CD4-positive, alpha-beta T cell (primary cell): ENCODE measurements at regions of chr1 and their contacts with region 1.

Region 1: GRCh38 chr1:89286549-89287180 is 14.0 kb upstream of the GBP5 start:
- DNase-seq: peak in 3 of 14 experiments; percentile 39 to 82 (median 48)
- ATAC-seq: peak; percentile 76
- H3K4me3 ChIP-seq: peak overlapping the region; percentile 28
- H3K4me3 Mint-ChIP-seq: peak overlapping the region; percentile 62
- H3K27ac ChIP-seq: peak overlapping the region; percentile 53 to 54
- H3K27ac Mint-ChIP-seq: peak overlapping the region; percentile 78
- H3K4me1 ChIP-seq: peaks cover 45% of the 10 kb centered on the region
- H3K4me1 Mint-ChIP-seq: peaks cover 61% of the 10 kb centered on the region
- H3K27me3 ChIP-seq: no peaks in the 10 kb centered on the region
- H3K27me3 Mint-ChIP-seq: no peaks in the 10 kb centered on the region
- CTCF ChIP-seq: no peak

Region 2: DNA sequence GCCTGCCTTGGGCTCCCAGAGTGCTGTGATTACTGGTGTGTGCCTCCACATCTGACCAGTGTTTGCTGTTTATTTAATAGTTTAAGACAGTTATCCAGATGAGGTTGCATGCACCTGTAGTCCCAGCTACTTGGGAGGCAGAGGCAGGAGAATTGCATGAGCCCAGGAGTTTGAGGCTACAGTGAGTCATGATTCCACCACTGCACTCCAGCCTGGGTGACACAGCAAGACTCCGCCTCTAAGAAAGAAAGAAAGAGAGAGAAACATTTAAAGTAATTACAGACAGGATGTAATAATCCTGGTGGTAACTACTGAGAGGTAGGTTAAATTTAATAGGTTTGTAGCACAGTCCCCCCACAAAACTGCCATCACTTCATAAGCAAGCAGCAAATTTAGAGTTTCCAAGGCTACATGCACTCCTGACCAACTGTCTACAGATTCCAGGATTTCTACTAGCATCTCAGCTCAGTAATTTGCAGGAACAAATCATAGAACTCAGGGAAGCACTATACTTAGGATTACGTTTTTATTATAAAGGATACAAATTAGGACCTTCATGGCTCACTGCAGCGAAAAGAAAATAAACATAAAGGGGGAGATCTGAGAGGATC is 513.0 kb before region 1 on chr1:
- CTCF ChIA-PET with region 1: no interaction called
- POLR2A ChIA-PET with region 1: no interaction called
- intact Hi-C with region 1: no loop called
- DNase-seq: no peak
- ATAC-seq: no peak
- H3K4me3 ChIP-seq: no peak overlapping the region
- H3K4me3 Mint-ChIP-seq: no peak overlapping the region
- H3K27ac ChIP-seq: no peak overlapping the region
- H3K27ac Mint-ChIP-seq: no peak overlapping the region
- H3K4me1 ChIP-seq: no peaks in the 10 kb centered on the region
- H3K4me1 Mint-ChIP-seq: no peaks in the 10 kb centered on the region
- H3K27me3 ChIP-seq: no peaks in the 10 kb centered on the region
- H3K27me3 Mint-ChIP-seq: no peaks in the 10 kb centered on the region
- CTCF ChIP-seq: no peak

Region 3: DNA sequence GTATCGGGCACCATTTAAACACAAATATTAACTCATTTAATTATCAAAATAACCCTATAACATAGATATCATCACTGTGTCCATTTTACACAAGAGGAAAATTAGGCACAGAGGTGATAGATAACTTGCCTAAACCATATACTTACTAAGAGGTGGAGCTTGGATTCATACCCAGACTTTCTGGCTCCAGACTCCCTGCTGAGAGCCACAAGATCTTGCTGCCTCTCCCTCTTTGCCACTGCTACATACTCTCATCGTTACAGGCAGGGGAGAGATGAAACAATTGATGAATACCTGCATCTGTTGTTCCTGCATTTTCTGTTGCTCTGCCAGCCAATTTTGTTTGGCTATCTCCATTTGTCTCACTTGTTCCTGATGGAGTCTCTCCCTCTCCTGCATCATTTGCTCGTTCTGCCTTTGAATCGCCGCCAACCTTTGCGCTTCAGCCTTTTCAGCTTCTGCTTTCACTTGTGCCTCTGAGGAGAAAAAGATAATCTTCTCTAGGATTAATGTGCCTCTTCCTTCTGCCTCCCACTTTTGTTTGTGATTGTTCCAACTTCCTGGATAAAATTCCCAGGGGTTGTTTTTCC is 24.6 kb before region 1 on chr1:
- CTCF ChIA-PET with region 1: no interaction called
- POLR2A ChIA-PET with region 1: interaction called, 26 read pairs
- intact Hi-C with region 1: no loop called
- DNase-seq: no peak
- ATAC-seq: no peak
- H3K4me3 ChIP-seq: no peak overlapping the region
- H3K4me3 Mint-ChIP-seq: no peak overlapping the region
- H3K27ac ChIP-seq: no peak overlapping the region
- H3K27ac Mint-ChIP-seq: peak overlapping the region; percentile 15
- H3K4me1 ChIP-seq: peaks cover 35% of the 10 kb centered on the region
- H3K4me1 Mint-ChIP-seq: peaks cover 66% of the 10 kb centered on the region
- H3K27me3 ChIP-seq: no peaks in the 10 kb centered on the region
- H3K27me3 Mint-ChIP-seq: no peaks in the 10 kb centered on the region
- CTCF ChIP-seq: no peak

Region 4: GRCh38 chr1:89298461-89298860 is 11.8 kb after region 1 on chr1:
- CTCF ChIA-PET with region 1: interaction called, 3 read pairs
- POLR2A ChIA-PET with region 1: interaction called, 24 read pairs
- intact Hi-C with region 1: no loop called
- DNase-seq: no peak
- ATAC-seq: no peak
- H3K4me3 ChIP-seq: no peak overlapping the region
- H3K4me3 Mint-ChIP-seq: no peak overlapping the region
- H3K27ac ChIP-seq: no peak overlapping the region
- H3K27ac Mint-ChIP-seq: no peak overlapping the region
- H3K4me1 ChIP-seq: peaks cover 19% of the 10 kb centered on the region
- H3K4me1 Mint-ChIP-seq: peaks cover 45% of the 10 kb centered on the region
- H3K27me3 ChIP-seq: no peaks in the 10 kb centered on the region
- H3K27me3 Mint-ChIP-seq: no peaks in the 10 kb centered on the region
- CTCF ChIP-seq: no peak

Region 5: GRCh38 chr1:89391686-89392085 is 105.0 kb after region 1 on chr1:
- CTCF ChIA-PET with region 1: no interaction called
- POLR2A ChIA-PET with region 1: no interaction called
- intact Hi-C with region 1: no loop called
- DNase-seq: no peak
- ATAC-seq: no peak
- H3K4me3 ChIP-seq: no peak overlapping the region
- H3K4me3 Mint-ChIP-seq: no peak overlapping the region
- H3K27ac ChIP-seq: no peak overlapping the region
- H3K27ac Mint-ChIP-seq: no peak overlapping the region
- H3K4me1 ChIP-seq: no peaks in the 10 kb centered on the region
- H3K4me1 Mint-ChIP-seq: no peaks in the 10 kb centered on the region
- H3K27me3 ChIP-seq: no peaks in the 10 kb centered on the region
- H3K27me3 Mint-ChIP-seq: no peaks in the 10 kb centered on the region
- CTCF ChIP-seq: no peak

Region 6: GRCh38 chr1:89433421-89433820 is 146.8 kb after region 1 on chr1:
- CTCF ChIA-PET with region 1: no interaction called
- POLR2A ChIA-PET with region 1: no interaction called
- intact Hi-C with region 1: no loop called
- DNase-seq: no peak
- ATAC-seq: no peak
- H3K4me3 ChIP-seq: no peak overlapping the region
- H3K4me3 Mint-ChIP-seq: no peak overlapping the region
- H3K27ac ChIP-seq: no peak overlapping the region
- H3K27ac Mint-ChIP-seq: no peak overlapping the region
- H3K4me1 ChIP-seq: no peaks in the 10 kb centered on the region
- H3K4me1 Mint-ChIP-seq: no peaks in the 10 kb centered on the region
- H3K27me3 ChIP-seq: no peaks in the 10 kb centered on the region
- H3K27me3 Mint-ChIP-seq: peaks cover 8% of the 10 kb centered on the region
- CTCF ChIP-seq: no peak